ENCODE measurements at regions of chr12 and their contacts with region 1.

Region 1: GRCh38 chr12:120710031-120710804 is at the start of gene UNC119B:
- DNase-seq: peak; percentile 56
- ATAC-seq: peak; percentile 68
- H3K4me3 ChIP-seq: peak within 1 kb of the TSS; percentile 83
- H3K27ac ChIP-seq: 0 out of 2 replicates have a peak within 1 kb of the TSS, but pooled peaks have one; percentile 9
- H3K4me1 ChIP-seq: peaks cover 25% of the 10 kb centered on the region
- H3K27me3 ChIP-seq: no peaks in the 10 kb centered on the region
- CTCF ChIP-seq: no peak
- total RNA-seq, gene UNC119B: 15.9 and 23.8 TPM in 2 replicates

Region 2: GRCh38 chr12:120554678-120555077 is 155.5 kb before region 1 on chr12:
- CTCF ChIA-PET with region 1: no interaction called
- POLR2A ChIA-PET with region 1: no interaction called
- intact Hi-C with region 1: no loop called
- DNase-seq: no peak
- ATAC-seq: no peak
- H3K4me3 ChIP-seq: no peak overlapping the region
- H3K27ac ChIP-seq: no peak overlapping the region
- H3K4me1 ChIP-seq: no peaks in the 10 kb centered on the region
- H3K27me3 ChIP-seq: no peaks in the 10 kb centered on the region
- CTCF ChIP-seq: no peak

Region 3: DNA sequence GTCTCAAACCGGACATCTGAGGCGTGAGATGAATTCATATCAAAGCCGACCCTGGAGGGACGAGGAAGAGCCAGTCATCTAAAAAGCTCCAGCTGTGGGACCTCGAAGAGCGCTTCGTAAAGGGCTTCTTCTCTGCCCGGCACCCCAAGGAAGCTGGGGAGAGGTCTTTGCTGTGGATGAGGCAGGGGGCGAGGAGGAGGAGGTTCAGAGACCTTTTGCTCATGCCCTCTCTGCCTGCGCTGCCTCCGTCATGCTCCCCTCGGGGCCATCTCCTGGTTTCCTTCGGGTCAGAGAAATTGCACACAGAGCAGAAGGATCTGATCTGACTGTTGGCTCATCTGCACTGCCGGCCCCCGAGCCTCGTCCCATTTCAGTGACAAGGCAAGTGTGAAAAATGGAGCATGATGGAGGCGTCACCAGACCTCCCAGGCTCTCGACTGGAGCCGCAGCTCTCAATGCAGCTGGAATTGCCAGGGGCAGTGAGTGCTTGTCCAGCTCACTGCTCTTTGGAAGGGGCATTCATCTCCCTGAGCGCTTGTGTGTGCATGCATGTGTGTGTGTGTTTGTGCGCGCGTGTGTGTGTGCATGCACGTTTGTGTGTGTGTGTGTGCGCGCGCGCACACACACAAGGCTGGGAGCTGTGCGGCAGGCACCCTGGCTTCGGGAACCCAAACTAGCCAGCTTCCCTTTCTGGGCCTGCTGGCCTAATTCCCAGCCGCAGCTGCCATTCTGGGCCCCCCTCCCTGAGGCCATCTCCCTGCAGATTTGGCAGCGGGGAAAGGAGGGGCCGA is 60.6 kb before region 1 on chr12:
- CTCF ChIA-PET with region 1: interaction called, 5 read pairs
- POLR2A ChIA-PET with region 1: no interaction called
- intact Hi-C with region 1: loop called (anchors 1 kb)
- DNase-seq: no peak
- ATAC-seq: no peak
- H3K4me3 ChIP-seq: peak overlapping the region; percentile 64; the same call in 1 of the 2 replicates
- H3K27ac ChIP-seq: no peak overlapping the region
- H3K4me1 ChIP-seq: peaks cover 5% of the 10 kb centered on the region
- H3K27me3 ChIP-seq: no peaks in the 10 kb centered on the region
- CTCF ChIP-seq: peak; percentile 38; the same call in 1 of the 2 replicates

Region 4: GRCh38 chr12:120686690-120687577 is 23.3 kb before region 1 on chr12 and contains the start of gene MLEC:
- CTCF ChIA-PET with region 1: no interaction called
- POLR2A ChIA-PET with region 1: no interaction called
- intact Hi-C with region 1: loop called (anchors 2 kb)
- DNase-seq: peak; percentile 98
- ATAC-seq: peak; percentile 76
- H3K4me3 ChIP-seq: peak within 1 kb of the TSS; percentile 96
- H3K27ac ChIP-seq: peak within 1 kb of the TSS; percentile 93
- H3K4me1 ChIP-seq: peaks cover 34% of the 10 kb centered on the region
- H3K27me3 ChIP-seq: no peaks in the 10 kb centered on the region
- CTCF ChIP-seq: peak; percentile 18; the same call in 1 of the 2 replicates
- total RNA-seq, gene MLEC: 158 and 166 TPM in 2 replicates

Region 5: DNA sequence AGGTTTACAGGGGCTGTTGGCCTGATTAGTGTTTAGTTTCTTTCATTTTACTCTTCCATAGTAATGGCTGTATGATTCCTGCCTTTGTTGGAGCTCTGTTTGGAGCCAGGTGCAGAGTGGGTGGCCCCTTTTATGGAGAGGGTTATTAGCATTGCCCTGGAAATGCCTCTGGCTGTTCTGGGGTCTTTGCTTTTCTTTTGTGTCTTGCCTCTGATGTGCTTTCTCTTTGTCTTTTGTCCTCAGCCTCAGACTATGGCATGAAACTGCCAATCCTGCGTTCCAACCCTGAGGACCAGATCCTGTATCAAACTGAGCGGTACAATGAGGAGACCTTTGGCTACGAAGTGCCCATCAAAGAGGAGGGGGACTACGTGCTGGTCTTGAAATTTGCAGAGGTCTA is 16.4 kb before region 1 on chr12:
- CTCF ChIA-PET with region 1: no interaction called
- POLR2A ChIA-PET with region 1: interaction called, 21 read pairs
- intact Hi-C with region 1: loop called (anchors 2 kb)
- DNase-seq: no peak
- ATAC-seq: no peak
- H3K4me3 ChIP-seq: no peak overlapping the region
- H3K27ac ChIP-seq: no peak overlapping the region
- H3K4me1 ChIP-seq: peaks cover 33% of the 10 kb centered on the region
- H3K27me3 ChIP-seq: no peaks in the 10 kb centered on the region
- CTCF ChIP-seq: no peak

Region 6: DNA sequence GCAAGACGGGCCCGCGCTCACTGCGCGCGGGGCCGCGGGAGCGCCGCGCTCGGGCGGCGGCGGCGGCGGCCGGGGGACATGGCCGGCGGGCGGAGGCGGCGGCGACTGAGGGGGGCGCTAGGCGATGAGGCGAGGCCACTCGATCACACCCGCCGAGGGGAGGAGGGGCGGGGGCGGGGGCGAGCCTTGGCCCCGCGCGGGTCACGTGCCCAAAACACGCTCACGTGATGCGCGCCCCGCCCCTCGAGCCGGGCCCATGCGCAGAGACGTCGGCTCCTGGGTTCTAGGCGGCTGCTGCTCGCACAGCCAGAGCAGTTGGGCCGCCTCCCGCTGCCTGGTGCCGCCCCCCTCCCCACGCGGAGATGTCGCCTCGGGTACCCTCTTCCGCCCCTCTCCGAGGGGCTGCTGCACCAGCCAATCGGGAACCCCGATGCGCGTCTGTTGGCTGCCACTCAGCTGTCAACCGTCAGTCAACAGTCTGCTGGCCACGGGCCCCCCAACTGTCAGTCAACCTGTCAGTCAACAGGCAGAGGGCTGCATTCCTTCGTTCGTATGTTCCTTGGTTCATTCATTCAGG is 194.1 kb after region 1 on chr12 and contains the start of gene SPPL3:
- CTCF ChIA-PET with region 1: no interaction called
- POLR2A ChIA-PET with region 1: no interaction called
- intact Hi-C with region 1: loop called (anchors 5 kb)
- DNase-seq: peak; percentile 88
- ATAC-seq: peak; percentile 73
- H3K4me3 ChIP-seq: peak within 1 kb of the TSS; percentile 94
- H3K27ac ChIP-seq: 0 out of 2 replicates have a peak within 1 kb of the TSS, but pooled peaks have one; percentile 4
- H3K4me1 ChIP-seq: peaks cover 20% of the 10 kb centered on the region
- H3K27me3 ChIP-seq: no peaks in the 10 kb centered on the region
- CTCF ChIP-seq: no peak
- total RNA-seq, gene SPPL3: 18.8 and 20.3 TPM in 2 replicates

Measured in PC-3 (cell line).